ENCODE measurements at regions of chr12 and their contacts with region 1.

Region 1: GRCh38 chr12:50167041-50167828 is at the start of gene CERS5:
- DNase-seq: peak; percentile 97 to 99 (median 99)
- H3K4me3 ChIP-seq: peak within 1 kb of the TSS; percentile 94
- H3K27ac ChIP-seq: peak within 1 kb of the TSS; percentile 26 to 91
- H3K4me1 ChIP-seq: peaks cover 6% of the 10 kb centered on the region
- H3K27me3 ChIP-seq: no peaks in the 10 kb centered on the region
- CTCF ChIP-seq: peak in 2 of 3 donors; percentile 62 to 73
- EP300 ChIP-seq: no peak
- POLR2A ChIP-seq: peak; percentile 88
- total RNA-seq, gene CERS5: 29.1 to 67.3 (median 44.9) TPM

Region 2: GRCh38 chr12:50025187-50026059 is 141.8 kb before region 1 on chr12 and contains the start of gene RACGAP1:
- intact Hi-C with region 1: no loop called
- DNase-seq: peak; percentile 92 to 97 (median 95)
- H3K4me3 ChIP-seq: peak within 1 kb of the TSS; percentile 80
- H3K27ac ChIP-seq: no peak within 1 kb of the TSS
- H3K4me1 ChIP-seq: no peaks in the 10 kb centered on the region
- H3K27me3 ChIP-seq: no peaks in the 10 kb centered on the region
- CTCF ChIP-seq: no peak
- EP300 ChIP-seq: no peak
- POLR2A ChIP-seq: no peak
- total RNA-seq, gene RACGAP1: 2.1 to 4.8 (median 3.8) TPM

Region 3: DNA sequence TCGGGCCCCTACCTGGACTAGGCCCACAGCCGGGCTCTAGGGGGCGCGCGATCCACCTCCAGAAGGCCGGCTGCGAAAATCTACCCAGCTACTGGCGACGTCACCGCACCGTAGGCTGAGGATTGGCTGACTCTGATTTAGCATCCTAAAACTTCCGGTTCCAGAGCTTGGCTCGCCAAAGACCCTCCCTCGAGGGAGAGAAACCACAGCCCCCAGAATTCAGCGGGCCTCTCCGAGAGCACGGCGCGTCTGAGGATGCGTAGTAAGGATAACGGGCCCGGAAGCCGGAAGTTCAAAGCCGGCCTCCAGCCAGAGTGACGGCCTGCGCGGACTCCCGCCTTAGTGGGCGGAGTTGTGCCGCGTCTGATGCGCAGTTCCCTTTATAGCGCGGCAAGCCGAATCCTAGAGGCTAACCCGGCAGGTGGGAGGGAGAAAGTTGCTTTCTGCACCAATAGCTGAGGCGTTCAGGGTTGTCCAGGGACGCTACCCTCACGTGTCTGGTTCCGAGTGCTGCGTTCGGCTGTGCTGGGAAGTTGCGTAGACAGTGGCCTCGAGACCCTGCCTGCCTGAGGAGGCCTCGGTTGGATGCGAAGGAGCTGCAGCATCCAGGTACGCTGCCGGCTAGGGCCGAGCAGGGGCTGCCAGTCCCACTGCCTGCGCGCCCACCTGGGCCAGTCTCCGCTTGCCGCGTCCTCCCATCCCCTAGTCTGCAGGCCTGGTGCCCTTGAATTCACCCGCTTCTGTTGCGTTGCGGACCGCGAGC is 55.4 kb before region 1 on chr12 and contains the start of gene COX14:
- intact Hi-C with region 1: loop called in 3 of 4 experiments (anchors 5 to 10 kb)
- DNase-seq: peak; percentile 98 to 99 (median 99)
- H3K4me3 ChIP-seq: peak within 1 kb of the TSS; percentile 94
- H3K27ac ChIP-seq: peak within 1 kb of the TSS; percentile 63 to 96
- H3K4me1 ChIP-seq: no peaks in the 10 kb centered on the region
- H3K27me3 ChIP-seq: no peaks in the 10 kb centered on the region
- CTCF ChIP-seq: peak; percentile 89 to 97 (median 91)
- EP300 ChIP-seq: peak; percentile 77
- POLR2A ChIP-seq: peak; percentile 98
- total RNA-seq, gene COX14: 37.5 to 72.6 (median 45.4) TPM

Region 4: DNA sequence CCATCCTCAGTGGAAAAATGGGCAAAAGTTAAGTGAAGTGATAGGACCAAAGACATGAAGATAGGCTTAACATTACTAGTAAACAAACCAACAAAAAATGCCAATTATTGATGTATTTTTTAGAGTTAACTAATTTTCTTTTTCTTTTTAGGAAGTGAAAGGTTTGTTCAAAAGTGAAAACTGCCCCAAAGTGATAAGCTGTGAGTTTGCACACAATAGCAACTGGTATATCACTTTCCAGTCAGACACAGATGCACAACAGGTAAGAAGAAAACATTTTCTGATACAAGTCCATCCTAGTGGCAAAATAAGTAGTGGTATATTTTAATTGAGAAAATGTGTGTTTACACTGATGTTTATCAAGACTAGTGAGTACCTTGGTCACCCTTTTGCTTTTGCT is 273.1 kb after region 1 on chr12:
- intact Hi-C with region 1: no loop called
- DNase-seq: no peak
- H3K4me3 ChIP-seq: no peak overlapping the region
- H3K27ac ChIP-seq: no peak overlapping the region
- H3K4me1 ChIP-seq: no peaks in the 10 kb centered on the region
- H3K27me3 ChIP-seq: no peaks in the 10 kb centered on the region
- CTCF ChIP-seq: no peak
- EP300 ChIP-seq: no peak
- POLR2A ChIP-seq: no peak

Measured in ovary (tissue), 10 donors.